ENCODE measurements at regions of chr2 and their contacts with region 1.

Region 1: DNA sequence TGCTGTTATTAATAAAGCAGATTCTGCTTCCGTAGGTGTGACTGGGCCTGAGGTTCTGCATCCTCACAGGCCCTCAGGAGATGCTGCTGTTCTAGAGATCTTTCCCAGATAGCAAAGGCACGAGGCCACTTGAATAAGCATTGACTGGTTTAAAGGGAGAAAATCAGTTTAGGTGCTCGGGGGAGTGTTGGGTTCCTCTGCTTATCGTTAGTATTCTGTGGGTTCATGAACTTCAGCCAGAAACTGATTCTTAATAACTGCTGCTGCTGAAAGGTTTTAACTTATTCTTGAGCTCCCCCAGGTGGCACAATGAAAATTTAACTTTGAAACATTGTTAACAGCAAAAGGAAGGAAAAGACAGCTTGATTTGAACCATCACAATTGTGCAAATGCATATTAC is 56.9 kb downstream of the ITGA6 start:
- DNase-seq: peak in 4 of 14 experiments; percentile 32 to 62 (median 54)
- ATAC-seq: peak; percentile 74
- H3K4me3 ChIP-seq: no peak overlapping the region
- H3K4me3 Mint-ChIP-seq: peak overlapping the region; percentile 34
- H3K27ac ChIP-seq: no peak overlapping the region
- H3K27ac Mint-ChIP-seq: peak overlapping the region; percentile 71
- H3K4me1 ChIP-seq: peaks cover 15% of the 10 kb centered on the region
- H3K4me1 Mint-ChIP-seq: peaks cover 52% of the 10 kb centered on the region
- H3K27me3 ChIP-seq: no peaks in the 10 kb centered on the region
- H3K27me3 Mint-ChIP-seq: no peaks in the 10 kb centered on the region
- CTCF ChIP-seq: peak; percentile 68

Region 2: DNA sequence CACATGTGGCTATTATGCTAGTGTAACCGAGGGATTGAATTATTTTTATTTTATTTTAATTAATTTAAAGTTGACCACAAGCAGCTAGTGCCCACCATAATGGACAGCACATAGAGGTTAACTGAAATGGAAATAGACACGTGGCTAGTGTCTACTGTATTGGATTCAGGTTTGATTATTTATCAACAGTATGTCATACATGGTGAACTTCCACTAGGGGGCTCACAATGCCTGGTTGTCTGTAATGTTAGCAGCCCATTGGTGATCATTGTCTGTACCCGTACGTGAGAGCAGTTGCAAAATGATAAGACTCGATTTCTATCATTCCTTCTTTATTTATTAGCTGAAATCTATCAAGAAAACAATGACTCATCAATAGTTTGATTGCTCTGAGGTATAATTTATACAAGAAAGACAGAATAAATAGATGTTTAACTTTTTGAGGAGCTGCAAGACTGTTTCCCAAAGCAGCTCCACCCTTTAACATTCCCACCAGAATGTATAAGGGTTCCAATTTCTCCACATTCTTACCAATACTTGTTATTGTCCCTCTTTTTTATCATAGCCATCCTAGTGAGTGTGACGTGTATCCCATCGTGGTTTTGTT is 885.4 kb before region 1 on chr2:
- CTCF ChIA-PET with region 1: no interaction called
- POLR2A ChIA-PET with region 1: no interaction called
- intact Hi-C with region 1: loop called (anchors 2 to 5 kb)
- DNase-seq: peak in 12 of 14 experiments; percentile 1 to 75 (median 28)
- ATAC-seq: peak; percentile 92
- H3K4me3 ChIP-seq: no peak overlapping the region
- H3K4me3 Mint-ChIP-seq: no peak overlapping the region
- H3K27ac ChIP-seq: no peak overlapping the region
- H3K27ac Mint-ChIP-seq: no peak overlapping the region
- H3K4me1 ChIP-seq: no peaks in the 10 kb centered on the region
- H3K4me1 Mint-ChIP-seq: peaks cover 6% of the 10 kb centered on the region
- H3K27me3 ChIP-seq: no peaks in the 10 kb centered on the region
- H3K27me3 Mint-ChIP-seq: no peaks in the 10 kb centered on the region
- CTCF ChIP-seq: peak; percentile 92

Region 3: GRCh38 chr2:171811245-171811628 is 673.0 kb before region 1 on chr2:
- CTCF ChIA-PET with region 1: no interaction called
- POLR2A ChIA-PET with region 1: no interaction called
- intact Hi-C with region 1: loop called (anchors 1 to 5 kb)
- DNase-seq: peak in 3 of 14 experiments; percentile 23 to 31 (median 24)
- ATAC-seq: no peak
- H3K4me3 ChIP-seq: no peak overlapping the region
- H3K4me3 Mint-ChIP-seq: no peak overlapping the region
- H3K27ac ChIP-seq: no peak overlapping the region
- H3K27ac Mint-ChIP-seq: no peak overlapping the region
- H3K4me1 ChIP-seq: no peaks in the 10 kb centered on the region
- H3K4me1 Mint-ChIP-seq: no peaks in the 10 kb centered on the region
- H3K27me3 ChIP-seq: no peaks in the 10 kb centered on the region
- H3K27me3 Mint-ChIP-seq: no peaks in the 10 kb centered on the region
- CTCF ChIP-seq: peak; percentile 37

Region 4: GRCh38 chr2:172172513-172173173 is 311.6 kb before region 1 on chr2:
- CTCF ChIA-PET with region 1: no interaction called
- POLR2A ChIA-PET with region 1: no interaction called
- intact Hi-C with region 1: loop called in 1 of 2 experiments (anchors 5 kb)
- DNase-seq: peak in 13 of 14 experiments; percentile 45 to 83 (median 60)
- ATAC-seq: peak; percentile 96
- H3K4me3 ChIP-seq: peak overlapping the region; percentile 59
- H3K4me3 Mint-ChIP-seq: peak overlapping the region; percentile 74
- H3K27ac ChIP-seq: no peak overlapping the region
- H3K27ac Mint-ChIP-seq: no peak overlapping the region
- H3K4me1 ChIP-seq: peaks cover 12% of the 10 kb centered on the region
- H3K4me1 Mint-ChIP-seq: no peaks in the 10 kb centered on the region
- H3K27me3 ChIP-seq: peaks cover 0 to 6% of the 10 kb centered on the region in 2 experiments
- H3K27me3 Mint-ChIP-seq: no peaks in the 10 kb centered on the region
- CTCF ChIP-seq: peak; percentile 64

Region 5: GRCh38 chr2:172710584-172711024 is 226.4 kb after region 1 on chr2:
- CTCF ChIA-PET with region 1: no interaction called
- POLR2A ChIA-PET with region 1: no interaction called
- intact Hi-C with region 1: loop called in 1 of 2 experiments (anchors 10 kb)
- DNase-seq: peak in 13 of 14 experiments; percentile 14 to 59 (median 35)
- ATAC-seq: no peak
- H3K4me3 ChIP-seq: no peak overlapping the region
- H3K4me3 Mint-ChIP-seq: no peak overlapping the region
- H3K27ac ChIP-seq: no peak overlapping the region
- H3K27ac Mint-ChIP-seq: no peak overlapping the region
- H3K4me1 ChIP-seq: no peaks in the 10 kb centered on the region
- H3K4me1 Mint-ChIP-seq: no peaks in the 10 kb centered on the region
- H3K27me3 ChIP-seq: no peaks in the 10 kb centered on the region
- H3K27me3 Mint-ChIP-seq: peaks cover 11% of the 10 kb centered on the region
- CTCF ChIP-seq: peak; percentile 76

Measured in CD4-positive, alpha-beta T cell (primary cell).